GM13976 (cell line): ENCODE measurements at regions of chr20 and their contacts with region 1.

Region 1: DNA sequence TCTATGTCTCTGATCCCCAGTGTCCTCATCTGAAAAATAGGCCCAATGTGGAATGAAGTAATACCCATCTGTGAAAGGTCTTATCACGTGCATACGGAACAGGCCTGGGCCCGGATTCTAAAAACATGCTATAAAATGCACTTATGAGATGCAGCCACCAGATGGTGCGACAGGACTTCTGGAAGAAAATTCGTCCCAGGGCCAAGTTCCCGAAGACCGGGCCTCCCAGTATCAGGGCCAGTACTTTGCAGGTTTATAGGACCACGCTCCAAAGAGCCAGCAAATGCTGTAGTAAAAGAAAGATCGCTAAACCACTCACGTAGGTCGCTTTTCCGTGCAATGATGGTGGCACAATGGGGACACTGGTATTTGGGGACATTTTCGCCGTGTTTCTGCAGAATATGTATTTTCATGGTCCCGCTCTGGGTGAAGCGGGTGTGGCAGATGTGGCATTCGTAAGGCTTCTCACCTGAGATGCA is 10.6 kb downstream of the CTCFL start:
- DNase-seq: peak; percentile 57
- CTCF ChIP-seq: peak; percentile 32

Region 2: DNA sequence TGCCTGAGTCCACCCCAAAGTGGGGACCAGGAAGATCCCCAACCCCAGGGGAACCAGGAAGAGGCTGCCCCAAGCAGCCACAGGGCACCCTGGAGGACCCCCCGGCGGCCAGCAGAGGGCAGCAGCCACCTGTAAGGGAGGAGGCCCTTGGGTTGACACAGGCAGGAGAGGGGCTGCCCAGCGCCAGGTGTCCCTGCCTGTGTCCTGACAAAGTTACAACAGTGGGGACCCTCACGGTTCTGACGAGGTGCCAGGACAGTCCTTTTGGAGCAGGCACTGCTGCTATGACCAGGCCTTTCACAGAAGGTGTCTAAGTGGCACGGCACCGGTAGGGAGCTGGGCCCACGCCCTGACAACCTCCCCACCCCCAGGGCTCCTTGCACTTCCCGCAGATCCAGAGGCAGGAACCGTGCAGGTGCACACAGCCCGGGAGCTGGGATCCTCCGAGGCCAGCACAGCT is 424.6 kb before region 1 on chr20:
- in situ Hi-C with region 1: no loop called
- DNase-seq: peak; percentile 86
- CTCF ChIP-seq: peak; percentile 80

Region 3: GRCh38 chr20:57351042-57351783 is 163.1 kb before region 1 on chr20 and contains the start of gene RAE1:
- in situ Hi-C with region 1: no loop called
- DNase-seq: peak; percentile 90
- CTCF ChIP-seq: no peak

Region 4: GRCh38 chr20:57596998-57597939 is 83.0 kb after region 1 on chr20:
- in situ Hi-C with region 1: loop called (anchors 10 kb)
- DNase-seq: peak; percentile 93
- CTCF ChIP-seq: peak; percentile 94